ENCODE measurements at regions of chr1 and their contacts with region 1.

Region 1: GRCh38 chr1:33127001-33127791 is 46.2 kb downstream of the AZIN2 start:
- DNase-seq: peak; percentile 93
- ATAC-seq: peak; percentile 98
- H3K4me3 Mint-ChIP-seq: peak overlapping the region; percentile 93
- H3K27ac Mint-ChIP-seq: peak overlapping the region; percentile 92
- H3K4me1 Mint-ChIP-seq: peaks cover 25% of the 10 kb centered on the region
- H3K27me3 Mint-ChIP-seq: no peaks in the 10 kb centered on the region
- CTCF ChIP-seq: no peak

Region 2: DNA sequence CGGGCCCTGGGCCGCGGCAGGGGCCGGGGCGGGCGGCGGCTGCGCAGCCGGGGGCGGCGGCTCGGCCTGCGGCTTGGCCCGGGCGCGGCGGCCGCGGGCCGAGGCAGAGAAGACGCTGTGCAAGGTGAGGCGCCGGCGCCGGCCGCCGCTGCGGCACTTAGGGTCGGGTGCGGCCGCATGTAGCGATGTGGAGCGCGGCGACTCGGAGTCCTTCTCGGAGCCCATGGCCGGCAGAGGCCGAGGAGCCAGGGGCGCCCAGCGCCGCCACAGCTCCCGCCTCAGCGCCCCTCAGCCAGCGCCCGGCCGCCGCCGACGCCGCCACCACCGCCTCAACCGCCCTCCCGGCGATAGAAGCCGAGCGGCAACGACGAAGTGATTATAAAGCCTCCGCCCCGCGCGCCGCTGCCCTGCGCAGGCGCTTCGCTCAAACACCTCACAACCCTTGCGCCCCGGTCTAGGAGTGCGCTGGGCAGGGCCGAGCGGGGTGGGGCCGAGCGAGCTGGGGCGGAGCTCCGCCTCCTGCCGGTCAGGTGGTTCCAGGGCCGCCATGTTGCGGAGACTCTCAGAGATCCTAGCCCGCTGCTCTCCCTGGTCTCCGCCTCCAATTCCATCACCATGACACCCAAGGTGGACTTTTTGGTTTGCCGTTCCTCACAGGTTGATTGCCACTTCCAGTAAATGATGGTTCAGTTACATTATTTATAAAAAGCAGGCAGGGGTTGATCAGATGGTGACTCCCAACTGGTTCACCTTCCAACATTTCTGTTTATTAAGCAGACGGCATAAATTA is 162.5 kb before region 1 on chr1 and contains the start of gene RNF19B:
- CTCF ChIA-PET with region 1: interaction called, 4 read pairs
- POLR2A ChIA-PET with region 1: interaction called, 11 read pairs
- intact Hi-C with region 1: loop called (anchors 1 kb)
- DNase-seq: peak; percentile 92
- ATAC-seq: peak; percentile 91
- H3K4me3 Mint-ChIP-seq: peak within 1 kb of the TSS; percentile 90
- H3K27ac Mint-ChIP-seq: peak within 1 kb of the TSS; percentile 91
- H3K4me1 Mint-ChIP-seq: peaks cover 37% of the 10 kb centered on the region
- H3K27me3 Mint-ChIP-seq: no peaks in the 10 kb centered on the region
- CTCF ChIP-seq: no peak
- total RNA-seq, gene RNF19B: 22.7 and 23.6 TPM in 2 replicates

Region 3: GRCh38 chr1:32992489-32993323 is 134.5 kb before region 1 on chr1:
- CTCF ChIA-PET with region 1: no interaction called
- POLR2A ChIA-PET with region 1: interaction called, 11 read pairs
- intact Hi-C with region 1: no loop called
- DNase-seq: peak; percentile 67
- ATAC-seq: peak; percentile 89
- H3K4me3 Mint-ChIP-seq: peak overlapping the region; percentile 76
- H3K27ac Mint-ChIP-seq: peak overlapping the region; percentile 97
- H3K4me1 Mint-ChIP-seq: peaks cover 64% of the 10 kb centered on the region
- H3K27me3 Mint-ChIP-seq: no peaks in the 10 kb centered on the region
- CTCF ChIP-seq: no peak

Region 4: GRCh38 chr1:33181921-33182341 is 54.7 kb after region 1 on chr1 and contains the start of gene TRIM62:
- CTCF ChIA-PET with region 1: interaction called, 9 read pairs
- POLR2A ChIA-PET with region 1: interaction called, 54 read pairs
- intact Hi-C with region 1: loop called (anchors 1 kb)
- DNase-seq: peak; percentile 80
- ATAC-seq: peak; percentile 67
- H3K4me3 Mint-ChIP-seq: peak within 1 kb of the TSS; percentile 89
- H3K27ac Mint-ChIP-seq: peak within 1 kb of the TSS; percentile 79
- H3K4me1 Mint-ChIP-seq: peaks cover 21% of the 10 kb centered on the region
- H3K27me3 Mint-ChIP-seq: peaks cover 9% of the 10 kb centered on the region
- CTCF ChIP-seq: no peak
- total RNA-seq, gene TRIM62: 10.1 and 10.9 TPM in 2 replicates

Region 5: DNA sequence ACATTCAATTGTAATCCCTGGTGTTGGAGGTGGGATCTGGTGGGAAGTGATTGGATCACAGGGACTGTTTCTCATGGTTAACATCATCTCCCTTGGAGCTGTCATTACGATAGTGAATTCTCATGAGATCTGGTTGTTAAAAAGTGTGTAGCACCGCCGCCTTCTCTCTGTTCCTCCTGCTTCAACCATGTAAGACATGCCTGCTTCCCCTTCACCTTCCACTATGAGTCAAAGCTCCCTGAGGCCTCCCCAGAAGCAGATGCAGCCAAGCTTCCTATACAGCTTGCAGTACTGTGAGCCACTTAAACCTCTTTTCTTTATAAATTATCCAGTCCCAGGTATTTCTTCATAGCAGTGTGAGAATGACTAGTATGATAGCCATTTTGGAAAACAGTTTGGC is 84.8 kb after region 1 on chr1:
- CTCF ChIA-PET with region 1: no interaction called
- POLR2A ChIA-PET with region 1: no interaction called
- intact Hi-C with region 1: no loop called
- DNase-seq: no peak
- ATAC-seq: peak; percentile 14
- H3K4me3 Mint-ChIP-seq: no peak overlapping the region
- H3K27ac Mint-ChIP-seq: no peak overlapping the region
- H3K4me1 Mint-ChIP-seq: no peaks in the 10 kb centered on the region
- H3K27me3 Mint-ChIP-seq: peaks cover 36% of the 10 kb centered on the region
- CTCF ChIP-seq: no peak

Region 6: GRCh38 chr1:33349778-33350610 is 222.8 kb after region 1 on chr1:
- CTCF ChIA-PET with region 1: no interaction called
- POLR2A ChIA-PET with region 1: interaction called, 11 read pairs
- intact Hi-C with region 1: loop called (anchors 1 kb)
- DNase-seq: peak; percentile 77
- ATAC-seq: peak; percentile 88
- H3K4me3 Mint-ChIP-seq: peak overlapping the region; percentile 91
- H3K27ac Mint-ChIP-seq: peak overlapping the region; percentile 93
- H3K4me1 Mint-ChIP-seq: peaks cover 37% of the 10 kb centered on the region
- H3K27me3 Mint-ChIP-seq: no peaks in the 10 kb centered on the region
- CTCF ChIP-seq: no peak